K562 (cell line): ENCODE measurements at regions of chr15 and their contacts with region 1.

Region 1: DNA sequence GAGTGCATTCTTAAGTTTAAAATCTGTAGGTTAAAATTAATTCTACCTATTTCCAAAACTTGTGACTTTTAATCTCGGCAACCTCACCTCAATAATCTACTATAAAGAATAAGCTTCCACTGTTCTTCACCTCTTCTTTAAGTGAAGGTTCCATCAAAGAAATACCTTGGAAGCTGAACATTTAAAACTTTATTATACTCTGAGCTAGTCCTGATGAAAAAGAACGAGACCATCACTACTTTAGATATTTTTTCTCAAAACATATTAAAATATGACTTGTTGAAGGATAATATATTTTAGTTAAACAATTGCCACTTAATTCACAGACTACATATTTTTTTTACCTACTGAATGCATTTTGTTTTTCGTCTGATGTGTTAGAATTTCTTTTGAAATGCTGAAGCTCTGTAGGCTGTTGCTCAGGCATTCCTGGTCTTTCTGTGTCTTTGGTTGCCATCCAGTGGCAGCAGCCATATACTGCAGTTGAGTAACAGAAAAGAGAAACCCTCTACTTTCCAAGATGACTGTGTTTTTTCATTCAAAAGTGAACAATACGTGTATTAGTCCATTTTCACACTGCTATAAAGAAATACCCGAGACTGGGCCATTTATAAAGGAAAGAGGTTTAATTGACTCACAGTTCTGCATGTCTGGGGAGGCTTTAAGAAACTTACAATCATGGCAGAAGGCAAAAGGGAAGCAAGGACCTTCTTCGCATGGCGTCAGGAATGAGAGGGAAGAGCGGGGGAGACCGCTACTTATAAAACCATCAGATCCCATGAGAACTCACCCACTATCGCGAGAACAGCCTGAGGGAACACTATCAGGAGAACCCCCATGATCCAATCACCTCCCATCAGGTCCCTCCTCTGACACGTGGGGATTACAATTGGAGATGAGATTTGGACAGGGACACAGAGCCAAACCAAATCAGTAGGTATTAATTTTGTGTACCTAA is 4.5 kb upstream of the GOLGA8B start:
- DNase-seq: peak; percentile 72 to 87 (median 78)
- ATAC-seq: peak; percentile 74
- H3K4me3 ChIP-seq: peak overlapping the region; percentile 30
- H3K27ac ChIP-seq: peak overlapping the region; percentile 63; the same call in 2 of the 3 replicates
- H3K4me1 ChIP-seq: peaks cover 0 to 15% of the 10 kb centered on the region in 2 experiments; a peak in 3 of 5 replicates
- H3K27me3 ChIP-seq: no peaks in the 10 kb centered on the region
- CTCF ChIP-seq: peak; percentile 80 to 93 (median 82)
- EP300 ChIP-seq: no peak
- POLR2A ChIP-seq: peak; percentile 84
- RAD21 ChIP-seq: peak; percentile 92 to 94

Region 2: DNA sequence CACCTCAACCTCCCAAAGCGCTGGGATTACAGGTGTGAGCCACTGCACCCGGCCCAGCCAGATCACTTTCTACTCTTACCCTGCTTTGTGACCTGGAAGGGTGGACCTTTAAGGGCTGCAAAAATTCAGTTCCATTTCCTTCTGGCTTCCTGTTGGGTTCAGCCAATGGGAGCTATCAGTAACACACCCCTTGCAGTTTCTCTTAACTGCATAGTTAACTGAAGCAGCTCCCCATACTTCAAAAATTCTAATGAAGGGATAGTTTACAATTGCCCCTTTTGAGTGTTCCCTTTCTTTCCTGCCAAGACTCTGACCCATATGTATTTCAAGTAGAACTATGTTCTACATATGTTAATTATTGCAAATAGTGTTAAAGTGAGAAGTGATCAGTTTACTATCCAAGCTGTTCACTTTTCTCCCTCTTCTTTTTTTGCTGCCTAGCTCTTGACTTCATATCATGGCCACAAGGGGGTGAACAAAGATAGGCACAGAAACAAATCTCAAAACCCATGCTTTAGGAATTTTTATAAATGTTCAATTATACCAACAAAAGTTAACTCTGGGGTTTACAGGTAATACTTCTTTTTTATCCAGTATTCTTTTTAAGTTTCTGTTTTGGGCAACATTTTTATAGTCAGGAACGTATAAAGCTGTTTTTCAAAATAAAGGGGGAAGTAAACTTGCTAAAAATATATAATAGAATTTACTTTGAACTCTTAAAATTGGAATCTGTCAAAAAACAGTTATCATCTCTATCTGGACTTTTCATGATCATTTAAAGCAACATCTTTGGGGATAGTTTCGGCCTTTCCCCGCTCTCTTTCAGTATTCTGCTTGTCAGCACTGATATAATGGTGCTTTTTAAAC is 478.0 kb before region 1 on chr15:
- CTCF ChIA-PET with region 1: no interaction called
- POLR2A ChIA-PET with region 1: no interaction called
- in situ Hi-C with region 1: no loop called
- intact Hi-C with region 1: loop called (anchors 1 kb)
- DNase-seq: peak; percentile 28 to 60 (median 36)
- ATAC-seq: peak; percentile 83
- H3K4me3 ChIP-seq: no peak overlapping the region
- H3K27ac ChIP-seq: no peak overlapping the region
- H3K4me1 ChIP-seq: no peaks in the 10 kb centered on the region
- H3K27me3 ChIP-seq: no peaks in the 10 kb centered on the region
- CTCF ChIP-seq: peak; percentile 65 to 84 (median 73); a peak in 5 of 6 replicates
- EP300 ChIP-seq: no peak
- POLR2A ChIP-seq: no peak
- RAD21 ChIP-seq: peak; percentile 68 to 91

Region 3: GRCh38 chr15:34342737-34343575 is 245.0 kb before region 1 on chr15 and contains the starts of genes NOP10 and NUTM1:
- CTCF ChIA-PET with region 1: no interaction called
- POLR2A ChIA-PET with region 1: interaction called, 3 read pairs
- in situ Hi-C with region 1: no loop called
- intact Hi-C with region 1: loop called (anchors 1 kb)
- DNase-seq: peak; percentile 79 to 96 (median 82)
- ATAC-seq: peak; percentile 89
- H3K4me3 ChIP-seq: peak within 1 kb of the TSS; percentile 77
- H3K27ac ChIP-seq: peak within 1 kb of the TSS; percentile 97
- H3K4me1 ChIP-seq: peaks cover 9% of the 10 kb centered on the region in 2 experiments; a peak in 4 of 5 replicates
- H3K27me3 ChIP-seq: peaks cover 0 to 1% of the 10 kb centered on the region in 2 experiments; a peak in 2 of 5 replicates
- CTCF ChIP-seq: peak; percentile 90 to 99 (median 97)
- EP300 ChIP-seq: peak; percentile 30; the same call in 1 of the 2 replicates
- POLR2A ChIP-seq: peak; percentile 98
- RAD21 ChIP-seq: peak; percentile 71 to 82
- polyA plus RNA-seq, gene NOP10: 1,599 to 1,663 TPM
- polyA plus RNA-seq, gene NUTM1: 0.01 TPM in 1 of 2 experiments, not detected in the other

Region 4: DNA sequence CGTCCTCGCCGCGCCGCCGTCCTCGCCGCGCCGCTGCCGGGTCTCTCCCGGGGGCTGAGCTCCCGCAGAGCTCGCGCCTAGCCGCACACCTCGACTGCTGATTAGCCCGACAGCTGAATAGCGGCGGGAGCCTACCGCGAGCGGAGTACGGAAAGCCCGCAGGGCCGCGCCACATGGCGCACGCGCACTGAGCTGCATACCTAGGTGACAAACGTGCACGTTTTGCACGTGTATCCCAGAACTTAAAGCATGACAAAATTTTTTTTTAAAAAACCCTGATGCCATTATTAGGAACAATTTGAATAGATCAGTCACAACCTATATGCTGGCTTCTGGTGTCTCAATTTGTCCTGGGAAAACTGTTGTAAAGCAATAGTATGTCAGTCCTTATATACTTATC is 150.3 kb before region 1 on chr15 and contains the start of gene GOLGA8A:
- CTCF ChIA-PET with region 1: no interaction called
- POLR2A ChIA-PET with region 1: no interaction called
- in situ Hi-C with region 1: no loop called
- intact Hi-C with region 1: loop called (anchors 10 kb)
- DNase-seq: peak; percentile 86 to 94 (median 88)
- ATAC-seq: peak; percentile 79
- H3K4me3 ChIP-seq: peak within 1 kb of the TSS; percentile 74
- H3K27ac ChIP-seq: peak within 1 kb of the TSS; percentile 74
- H3K4me1 ChIP-seq: peaks cover 8 to 26% of the 10 kb centered on the region in 2 experiments; a peak in 3 of 5 replicates
- H3K27me3 ChIP-seq: no peaks in the 10 kb centered on the region
- CTCF ChIP-seq: no peak; a peak in 1 of 6 replicates
- EP300 ChIP-seq: no peak
- POLR2A ChIP-seq: peak; percentile 66; the same call in 1 of the 2 replicates
- RAD21 ChIP-seq: no peak
- polyA plus RNA-seq, gene GOLGA8A: 11.2 to 12.4 TPM